ENCODE measurements at regions of chr14 and their contacts with region 1.

Region 1: DNA sequence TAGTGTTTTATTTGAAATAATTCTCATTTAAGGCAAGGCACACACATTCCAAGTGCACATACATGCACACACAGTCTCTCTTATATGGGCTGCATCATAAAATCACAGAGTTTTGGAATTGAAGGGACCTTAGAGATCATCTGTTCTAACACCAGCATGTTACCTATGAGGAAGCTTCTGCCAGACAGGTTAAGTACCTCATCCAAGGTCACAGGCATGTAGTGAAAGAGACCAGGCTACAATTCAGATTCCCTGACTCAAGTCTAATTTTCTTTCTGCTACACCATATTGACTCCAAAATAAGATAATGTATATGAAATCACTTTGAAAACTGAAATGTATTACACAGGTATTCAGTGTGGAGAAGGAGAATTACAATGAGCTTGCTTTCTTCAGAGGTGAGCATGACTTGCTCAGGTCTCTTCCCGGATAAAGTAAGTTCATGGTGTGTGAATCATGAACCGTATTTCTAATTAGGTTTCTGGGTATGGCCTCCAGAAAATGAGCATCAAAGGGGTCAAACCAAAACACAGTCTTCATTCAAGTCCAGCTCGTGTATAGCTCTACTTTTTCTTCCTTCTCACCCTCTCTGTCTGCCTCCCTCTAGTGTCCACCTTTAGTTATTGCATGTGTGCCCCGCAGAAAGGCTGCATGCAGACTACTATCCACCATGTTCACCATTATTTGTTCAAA is 411.9 kb downstream of the FUT8 start:
- DNase-seq: peak; percentile 24 to 82
- ATAC-seq: peak; percentile 85 to 99 (median 95)
- H3K4me3 ChIP-seq: no peak overlapping the region
- H3K4me3 Mint-ChIP-seq: no peak overlapping the region
- H3K27ac ChIP-seq: no peak overlapping the region
- H3K27ac Mint-ChIP-seq: no peak overlapping the region
- H3K4me1 ChIP-seq: peaks cover 15% of the 10 kb centered on the region
- H3K4me1 Mint-ChIP-seq: peaks cover 6% of the 10 kb centered on the region in 2 donors
- H3K27me3 ChIP-seq: no peaks in the 10 kb centered on the region
- H3K27me3 Mint-ChIP-seq: no peaks in the 10 kb centered on the region
- CTCF ChIP-seq: peak; percentile 95

Region 2: GRCh38 chr14:65164068-65164824 is 660.2 kb before region 1 on chr14:
- intact Hi-C with region 1: loop called (anchors 10 kb)
- DNase-seq: peak in 1 of 2 donors; percentile 79
- ATAC-seq: peak in 2 of 3 donors; percentile 35 to 42
- H3K4me3 ChIP-seq: no peak overlapping the region
- H3K4me3 Mint-ChIP-seq: no peak overlapping the region
- H3K27ac ChIP-seq: no peak overlapping the region
- H3K27ac Mint-ChIP-seq: no peak overlapping the region
- H3K4me1 ChIP-seq: peaks cover 4% of the 10 kb centered on the region
- H3K4me1 Mint-ChIP-seq: no peaks in the 10 kb centered on the region
- H3K27me3 ChIP-seq: no peaks in the 10 kb centered on the region
- H3K27me3 Mint-ChIP-seq: peaks cover 0 to 6% of the 10 kb centered on the region in 2 donors
- CTCF ChIP-seq: peak; percentile 59

Region 3: GRCh38 chr14:65222440-65222858 is 602.0 kb before region 1 on chr14:
- intact Hi-C with region 1: loop called (anchors 1 kb)
- DNase-seq: peak; percentile 17 to 76
- ATAC-seq: peak; percentile 66 to 80 (median 75)
- H3K4me3 ChIP-seq: no peak overlapping the region
- H3K4me3 Mint-ChIP-seq: no peak overlapping the region
- H3K27ac ChIP-seq: no peak overlapping the region
- H3K27ac Mint-ChIP-seq: no peak overlapping the region
- H3K4me1 ChIP-seq: peaks cover 17% of the 10 kb centered on the region
- H3K4me1 Mint-ChIP-seq: no peaks in the 10 kb centered on the region
- H3K27me3 ChIP-seq: no peaks in the 10 kb centered on the region
- H3K27me3 Mint-ChIP-seq: no peaks in the 10 kb centered on the region
- CTCF ChIP-seq: peak; percentile 88

Region 4: GRCh38 chr14:65412032-65412846 is 412.2 kb before region 1 on chr14 and contains the start of gene FUT8:
- intact Hi-C with region 1: loop called (anchors 1 kb)
- DNase-seq: peak; percentile 82 to 97
- ATAC-seq: peak; percentile 78 to 94 (median 83)
- H3K4me3 ChIP-seq: peak within 1 kb of the TSS; percentile 81
- H3K4me3 Mint-ChIP-seq: peak within 1 kb of the TSS; percentile 98
- H3K27ac ChIP-seq: peak within 1 kb of the TSS; percentile 68
- H3K27ac Mint-ChIP-seq: peak within 1 kb of the TSS; percentile 89 to 93
- H3K4me1 ChIP-seq: peaks cover 10% of the 10 kb centered on the region
- H3K4me1 Mint-ChIP-seq: peaks cover 14 to 22% of the 10 kb centered on the region in 2 donors
- H3K27me3 ChIP-seq: no peaks in the 10 kb centered on the region
- H3K27me3 Mint-ChIP-seq: peaks cover 0 to 2% of the 10 kb centered on the region in 2 donors
- CTCF ChIP-seq: peak; percentile 24
- total RNA-seq, gene FUT8: 20.7 to 29.2 (median 21.2) TPM

Measured in natural killer cell (primary cell).